MCF 10A (cell line): ENCODE measurements at regions of chr1 and their contacts with region 1.

Region 1: GRCh38 chr1:15617175-15617880 is at the start of gene DDI2:
- DNase-seq: peak; percentile 99
- H3K4me3 Mint-ChIP-seq: peak within 1 kb of the TSS; percentile 75
- H3K27ac Mint-ChIP-seq: peak within 1 kb of the TSS; percentile 86
- H3K4me1 Mint-ChIP-seq: peaks cover 28% of the 10 kb centered on the region
- H3K27me3 Mint-ChIP-seq: no peaks in the 10 kb centered on the region
- CTCF ChIP-seq: no peak
- total RNA-seq, gene DDI2: 26.6 and 32.7 TPM in 2 replicates

Region 2: DNA sequence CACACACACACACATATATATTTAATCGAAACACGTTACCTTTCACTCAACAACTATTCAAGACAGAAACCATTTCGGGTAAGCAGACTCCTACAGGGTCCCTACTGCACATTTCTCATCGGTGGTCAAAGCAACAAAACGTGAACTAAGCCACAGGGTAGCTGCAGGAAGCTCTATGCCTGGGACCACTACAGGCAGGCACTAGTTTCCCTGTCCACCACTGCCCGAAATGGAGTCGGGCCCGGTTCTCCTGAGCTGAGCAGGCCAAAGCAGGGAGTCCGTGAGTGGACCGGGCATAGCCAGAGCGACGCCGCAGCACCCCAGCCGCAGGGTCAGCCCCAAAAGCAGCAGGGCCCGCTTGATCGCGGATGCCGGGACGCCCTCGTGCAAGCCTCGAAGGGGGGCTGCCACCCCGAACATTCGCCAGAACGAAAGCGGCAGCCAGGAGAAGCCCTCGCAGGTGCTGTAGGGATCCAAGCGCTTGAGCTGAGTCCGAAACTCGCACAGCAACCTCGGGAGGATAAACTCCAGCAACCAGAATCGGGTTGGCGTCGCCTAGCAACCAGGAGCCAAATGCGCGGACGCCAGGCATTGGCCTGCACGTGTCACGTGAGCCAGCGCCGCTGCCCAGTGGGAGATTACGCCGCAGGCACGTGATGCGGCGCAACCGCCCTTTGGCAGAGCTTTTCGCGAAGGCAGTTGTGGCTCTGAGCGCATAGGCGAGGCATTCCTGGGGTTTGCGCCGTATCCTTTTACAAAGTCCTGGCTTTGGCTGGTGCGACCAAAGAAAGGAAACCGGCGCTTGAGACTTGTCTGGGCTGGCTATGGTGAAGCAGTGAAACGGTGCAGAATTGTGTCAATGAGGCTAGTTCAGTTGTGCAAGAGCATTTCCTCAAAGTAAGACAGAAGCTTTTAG is 14.0 kb before region 1 on chr1:
- CTCF ChIA-PET with region 1: no interaction called
- POLR2A ChIA-PET with region 1: interaction called, 78 read pairs
- intact Hi-C with region 1: no loop called
- DNase-seq: peak; percentile 95
- H3K4me3 Mint-ChIP-seq: peak overlapping the region; percentile 82
- H3K27ac Mint-ChIP-seq: peak overlapping the region; percentile 67
- H3K4me1 Mint-ChIP-seq: peaks cover 6% of the 10 kb centered on the region
- H3K27me3 Mint-ChIP-seq: no peaks in the 10 kb centered on the region
- CTCF ChIP-seq: no peak

Region 3: GRCh38 chr1:15678578-15678977 is 61.2 kb after region 1 on chr1:
- CTCF ChIA-PET with region 1: interaction called, 3 read pairs
- POLR2A ChIA-PET with region 1: interaction called, 78 read pairs
- intact Hi-C with region 1: loop called (anchors 2 kb)
- DNase-seq: peak; percentile 51
- H3K4me3 Mint-ChIP-seq: no peak overlapping the region
- H3K27ac Mint-ChIP-seq: no peak overlapping the region
- H3K4me1 Mint-ChIP-seq: peaks cover 34% of the 10 kb centered on the region
- H3K27me3 Mint-ChIP-seq: no peaks in the 10 kb centered on the region
- CTCF ChIP-seq: no peak

Region 4: GRCh38 chr1:15703562-15703961 is 86.2 kb after region 1 on chr1:
- CTCF ChIA-PET with region 1: interaction called, 3 read pairs
- POLR2A ChIA-PET with region 1: interaction called, 10 read pairs
- intact Hi-C with region 1: loop called (anchors 5 kb)
- DNase-seq: peak; percentile 86
- H3K4me3 Mint-ChIP-seq: peak overlapping the region; percentile 29
- H3K27ac Mint-ChIP-seq: peak overlapping the region; percentile 96
- H3K4me1 Mint-ChIP-seq: peaks cover 20% of the 10 kb centered on the region
- H3K27me3 Mint-ChIP-seq: no peaks in the 10 kb centered on the region
- CTCF ChIP-seq: no peak